ENCODE measurements at regions of chr10 and their contacts with region 1.

Region 1: DNA sequence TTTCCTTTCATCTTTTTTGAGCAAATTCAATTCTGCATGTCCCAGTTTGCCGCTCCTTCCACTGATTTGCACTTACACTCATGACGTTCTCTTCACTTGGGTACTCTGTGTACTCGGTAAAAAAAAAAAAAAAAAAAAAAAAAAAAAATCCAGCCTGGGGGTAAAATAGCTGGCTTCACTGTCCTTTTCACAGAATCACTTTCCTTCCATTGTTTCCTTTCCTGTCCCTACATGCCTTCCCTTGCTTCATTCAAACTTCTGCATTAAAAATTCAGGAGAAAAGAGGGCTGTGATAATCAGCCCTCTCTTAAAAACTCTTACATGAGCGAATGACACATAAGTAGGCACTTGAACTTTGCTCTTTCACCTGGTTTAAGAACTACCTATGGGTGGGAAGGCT is 8.7 kb downstream of the ANKRD1 start:
- DNase-seq: no peak
- ATAC-seq: no peak
- H3K4me3 ChIP-seq: no peak overlapping the region
- H3K27ac ChIP-seq: no peak overlapping the region
- H3K4me1 ChIP-seq: no peaks in the 10 kb centered on the region
- H3K27me3 ChIP-seq: no peaks in the 10 kb centered on the region
- CTCF ChIP-seq: no peak
- EP300 ChIP-seq: no peak
- POLR2A ChIP-seq: no peak
- RAD21 ChIP-seq: no peak

Region 2: DNA sequence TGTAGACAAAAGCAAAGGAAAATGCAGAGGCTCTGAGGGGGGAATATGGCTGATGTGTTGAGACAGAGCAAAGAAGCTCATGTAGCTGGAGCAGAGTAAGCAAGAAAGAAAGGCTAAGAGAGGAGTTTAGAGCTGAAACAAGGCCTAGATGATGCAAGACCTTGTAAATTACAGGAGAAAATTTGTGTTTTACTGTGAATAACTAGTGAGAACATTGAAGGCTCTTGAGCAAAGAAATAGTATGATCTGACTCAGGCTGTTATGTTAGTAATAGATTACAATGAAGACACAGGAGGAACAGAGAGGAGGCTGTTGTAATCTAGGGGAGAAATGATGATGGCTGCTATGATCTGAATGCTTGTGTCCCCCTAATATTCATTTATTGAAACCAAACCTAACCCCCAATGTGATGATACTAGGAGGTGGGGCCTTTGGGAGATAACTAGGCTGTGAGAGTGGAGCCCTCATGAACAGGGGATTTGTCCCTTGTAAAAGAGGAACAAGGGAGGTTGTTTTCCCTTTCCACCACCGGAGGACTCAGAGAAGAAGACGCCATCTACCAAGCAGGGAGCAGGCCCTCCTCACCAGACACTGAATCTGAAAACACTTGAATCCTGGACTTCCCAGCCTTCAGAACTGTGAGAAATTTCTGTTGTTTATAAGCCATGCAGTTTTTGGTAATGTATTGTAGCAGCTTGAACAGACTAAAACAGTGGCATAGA is 449.3 kb before region 1 on chr10:
- CTCF ChIA-PET with region 1: no interaction called
- POLR2A ChIA-PET with region 1: no interaction called
- RAD21 ChIA-PET with region 1: no interaction called
- SMC1A ChIA-PET with region 1: no interaction called
- in situ Hi-C with region 1: no loop called
- intact Hi-C with region 1: no loop called
- DNase-seq: no peak
- ATAC-seq: no peak
- H3K4me3 ChIP-seq: no peak overlapping the region
- H3K27ac ChIP-seq: no peak overlapping the region
- H3K4me1 ChIP-seq: no peaks in the 10 kb centered on the region
- H3K27me3 ChIP-seq: no peaks in the 10 kb centered on the region; a peak in 1 of 4 replicates
- CTCF ChIP-seq: no peak
- EP300 ChIP-seq: no peak
- POLR2A ChIP-seq: no peak
- RAD21 ChIP-seq: no peak

Region 3: GRCh38 chr10:90879062-90879461 is 33.1 kb before region 1 on chr10:
- CTCF ChIA-PET with region 1: interaction called, 12 read pairs
- POLR2A ChIA-PET with region 1: no interaction called
- RAD21 ChIA-PET with region 1: interaction called, 5 read pairs
- SMC1A ChIA-PET with region 1: interaction called, 7 read pairs
- in situ Hi-C with region 1: no loop called
- intact Hi-C with region 1: no loop called
- DNase-seq: no peak
- ATAC-seq: no peak
- H3K4me3 ChIP-seq: no peak overlapping the region
- H3K27ac ChIP-seq: no peak overlapping the region
- H3K4me1 ChIP-seq: 0 out of 2 replicates have a peak, but pooled peaks cover 7% of the 10 kb centered on the region
- H3K27me3 ChIP-seq: no peaks in the 10 kb centered on the region
- CTCF ChIP-seq: no peak
- EP300 ChIP-seq: no peak
- POLR2A ChIP-seq: no peak
- RAD21 ChIP-seq: no peak

Region 4: GRCh38 chr10:90999512-91000172 is 87.5 kb after region 1 on chr10:
- CTCF ChIA-PET with region 1: interaction called, 64 read pairs
- POLR2A ChIA-PET with region 1: interaction called, 5 read pairs
- RAD21 ChIA-PET with region 1: interaction called, 12 read pairs
- SMC1A ChIA-PET with region 1: interaction called, 100 read pairs
- in situ Hi-C with region 1: no loop called
- intact Hi-C with region 1: no loop called
- DNase-seq: peak; percentile 54
- ATAC-seq: peak; percentile 69
- H3K4me3 ChIP-seq: no peak overlapping the region
- H3K27ac ChIP-seq: peak overlapping the region; percentile 87
- H3K4me1 ChIP-seq: peaks cover 33% of the 10 kb centered on the region
- H3K27me3 ChIP-seq: no peaks in the 10 kb centered on the region
- CTCF ChIP-seq: no peak
- EP300 ChIP-seq: peak; percentile 31 to 80; a peak in 2 of 4 replicates
- POLR2A ChIP-seq: no peak
- RAD21 ChIP-seq: no peak

Region 5: DNA sequence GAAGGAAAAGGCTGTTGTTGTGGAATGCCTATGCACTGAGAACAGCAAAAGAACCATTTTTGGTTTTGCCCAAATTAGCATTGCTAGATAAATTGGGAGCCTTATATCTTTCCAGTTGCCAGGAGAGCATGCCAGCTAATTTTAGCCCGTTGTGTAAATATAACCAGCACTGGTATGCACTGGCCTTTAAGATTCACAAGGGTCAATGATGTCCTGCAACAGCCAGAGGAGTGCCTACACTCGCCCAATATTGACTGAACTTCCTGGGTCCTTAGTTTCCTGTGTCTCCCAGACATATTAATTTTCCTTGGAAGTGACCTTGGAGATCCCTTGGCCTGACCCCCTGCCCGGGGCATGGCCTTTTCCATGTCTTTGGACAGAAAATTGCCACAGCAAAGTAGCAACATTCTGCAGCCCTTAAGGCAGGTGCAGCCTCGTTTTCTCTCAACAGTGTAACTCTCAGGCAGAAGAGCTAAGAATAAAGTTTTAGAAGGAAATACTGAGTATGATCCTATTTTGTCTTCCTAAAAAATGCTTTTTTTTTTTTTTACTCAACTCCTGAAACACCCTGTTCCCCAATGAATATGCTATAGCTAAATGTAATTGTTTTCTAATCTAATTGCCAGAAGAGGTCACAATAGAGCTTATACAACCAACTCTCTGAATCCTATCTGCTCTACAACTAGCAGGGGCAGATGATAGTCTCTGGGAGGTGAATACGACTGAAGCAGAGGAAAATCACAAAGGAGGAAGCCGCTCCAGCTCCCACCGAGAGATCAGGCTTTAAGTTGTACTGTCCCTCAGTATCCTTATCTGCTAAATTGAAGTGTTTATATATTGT is 176.3 kb after region 1 on chr10:
- CTCF ChIA-PET with region 1: interaction called, 40 read pairs
- POLR2A ChIA-PET with region 1: no interaction called
- RAD21 ChIA-PET with region 1: interaction called, 9 read pairs
- SMC1A ChIA-PET with region 1: interaction called, 15 read pairs
- in situ Hi-C with region 1: no loop called
- intact Hi-C with region 1: no loop called
- DNase-seq: no peak
- ATAC-seq: peak; percentile 64
- H3K4me3 ChIP-seq: no peak overlapping the region
- H3K27ac ChIP-seq: no peak overlapping the region
- H3K4me1 ChIP-seq: no peaks in the 10 kb centered on the region
- H3K27me3 ChIP-seq: no peaks in the 10 kb centered on the region
- CTCF ChIP-seq: peak in 2 of 3 experiments; percentile 25 to 37; a peak in 3 of 6 replicates
- EP300 ChIP-seq: no peak
- POLR2A ChIP-seq: no peak
- RAD21 ChIP-seq: peak; percentile 75

Region 6: GRCh38 chr10:91242940-91243339 is 330.8 kb after region 1 on chr10:
- CTCF ChIA-PET with region 1: interaction called, 253 read pairs
- POLR2A ChIA-PET with region 1: interaction called, 3 read pairs
- RAD21 ChIA-PET with region 1: interaction called, 184 read pairs
- SMC1A ChIA-PET with region 1: interaction called, 202 read pairs
- in situ Hi-C with region 1: loop called (anchors 5 kb)
- intact Hi-C with region 1: no loop called
- DNase-seq: no peak
- ATAC-seq: peak; percentile 75
- H3K4me3 ChIP-seq: no peak overlapping the region
- H3K27ac ChIP-seq: no peak overlapping the region
- H3K4me1 ChIP-seq: peaks cover 19% of the 10 kb centered on the region
- H3K27me3 ChIP-seq: no peaks in the 10 kb centered on the region
- CTCF ChIP-seq: no peak
- EP300 ChIP-seq: no peak
- POLR2A ChIP-seq: no peak
- RAD21 ChIP-seq: no peak

Region 7: GRCh38 chr10:91287276-91287675 is 375.1 kb after region 1 on chr10:
- CTCF ChIA-PET with region 1: interaction called, 3 read pairs
- POLR2A ChIA-PET with region 1: no interaction called
- RAD21 ChIA-PET with region 1: no interaction called
- SMC1A ChIA-PET with region 1: interaction called, 17 read pairs
- in situ Hi-C with region 1: no loop called
- intact Hi-C with region 1: no loop called
- DNase-seq: no peak
- ATAC-seq: no peak
- H3K4me3 ChIP-seq: no peak overlapping the region
- H3K27ac ChIP-seq: no peak overlapping the region
- H3K4me1 ChIP-seq: no peaks in the 10 kb centered on the region
- H3K27me3 ChIP-seq: no peaks in the 10 kb centered on the region
- CTCF ChIP-seq: no peak
- EP300 ChIP-seq: no peak
- POLR2A ChIP-seq: no peak
- RAD21 ChIP-seq: no peak

Measured in GM12878 (cell line).